WTC11 (cell line): ENCODE measurements at regions of chr3 and their contacts with region 1.

Region 1: GRCh38 chr3:36881735-36882134 is 63.1 kb downstream of the TRANK1 start:
- DNase-seq: no peak
- ATAC-seq: no peak
- H3K4me3 Mint-ChIP-seq: no peak overlapping the region
- H3K27ac Mint-ChIP-seq: no peak overlapping the region
- H3K4me1 Mint-ChIP-seq: peaks cover 2% of the 10 kb centered on the region; the same call in 1 of the 2 replicates
- H3K27me3 Mint-ChIP-seq: no peaks in the 10 kb centered on the region
- CTCF ChIP-seq: no peak

Region 2: GRCh38 chr3:36693670-36694069 is 188.1 kb before region 1 on chr3:
- CTCF ChIA-PET with region 1: no interaction called
- POLR2A ChIA-PET with region 1: no interaction called
- DNase-seq: no peak
- ATAC-seq: no peak
- H3K4me3 Mint-ChIP-seq: no peak overlapping the region
- H3K27ac Mint-ChIP-seq: no peak overlapping the region
- H3K4me1 Mint-ChIP-seq: peaks cover 6% of the 10 kb centered on the region
- H3K27me3 Mint-ChIP-seq: no peaks in the 10 kb centered on the region
- CTCF ChIP-seq: no peak

Region 3: DNA sequence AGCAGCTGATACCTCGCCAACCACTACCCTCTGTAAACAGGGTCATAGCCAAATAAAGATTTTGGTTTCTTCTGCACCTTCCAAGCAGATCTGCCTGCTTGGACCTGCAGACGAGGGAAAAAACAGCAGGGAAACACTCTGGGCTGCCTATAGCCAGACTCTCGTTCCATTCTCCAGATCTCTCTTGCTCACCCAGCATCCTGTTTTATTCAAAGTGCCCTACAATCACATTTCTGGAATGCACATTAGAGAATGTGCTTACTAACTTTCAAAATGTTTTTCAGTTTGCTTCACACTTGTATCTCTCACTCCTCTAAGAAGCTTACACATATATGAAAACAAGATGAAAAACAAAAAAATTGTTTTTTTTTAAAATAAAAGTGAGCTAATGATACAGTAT is 183.0 kb after region 1 on chr3:
- CTCF ChIA-PET with region 1: no interaction called
- POLR2A ChIA-PET with region 1: interaction called, 10 read pairs
- DNase-seq: no peak
- ATAC-seq: no peak
- H3K4me3 Mint-ChIP-seq: no peak overlapping the region
- H3K27ac Mint-ChIP-seq: no peak overlapping the region
- H3K4me1 Mint-ChIP-seq: no peaks in the 10 kb centered on the region
- H3K27me3 Mint-ChIP-seq: no peaks in the 10 kb centered on the region
- CTCF ChIP-seq: no peak